PC-3 (cell line): ENCODE measurements at regions of chr13 and their contacts with region 1.

Region 1: DNA sequence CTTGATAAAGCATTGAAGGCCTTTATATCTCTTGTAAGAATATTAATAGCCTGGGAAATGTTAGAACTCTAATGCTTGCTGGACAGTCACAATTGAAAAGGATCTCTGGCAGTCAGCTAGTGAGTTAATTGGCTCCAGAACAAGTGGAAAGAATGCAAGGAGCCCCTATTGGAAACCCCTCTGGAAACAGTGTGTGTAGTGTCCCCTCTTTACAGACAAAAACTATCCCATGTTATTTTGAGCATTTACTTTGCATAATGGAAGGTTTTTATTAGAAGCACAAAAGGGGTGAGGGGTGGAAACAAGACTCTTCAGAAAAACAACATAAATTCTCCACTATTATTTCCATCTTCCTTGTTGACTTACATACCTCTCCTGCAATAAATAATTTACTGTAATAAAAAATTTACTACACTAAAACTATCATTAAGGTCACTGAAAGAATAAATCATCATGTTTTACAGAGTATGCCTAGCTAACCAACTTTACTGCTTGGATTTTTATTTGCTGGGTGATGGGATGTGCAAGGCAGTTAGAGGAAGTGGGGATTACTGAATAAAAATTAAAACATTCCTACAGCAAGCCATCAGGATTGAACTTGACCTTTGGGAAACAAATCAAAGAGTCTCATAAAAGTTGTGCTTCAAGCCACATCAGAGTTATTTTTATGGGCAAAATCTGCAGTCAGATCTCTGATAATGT is 610.4 kb downstream of the TBC1D4 start:
- DNase-seq: peak; percentile 91
- ATAC-seq: peak; percentile 71
- H3K4me3 ChIP-seq: peak overlapping the region; percentile 33; the same call in 1 of the 2 replicates
- H3K27ac ChIP-seq: peak overlapping the region; percentile 99
- H3K4me1 ChIP-seq: peaks cover 43% of the 10 kb centered on the region
- H3K27me3 ChIP-seq: no peaks in the 10 kb centered on the region
- CTCF ChIP-seq: no peak

Region 2: DNA sequence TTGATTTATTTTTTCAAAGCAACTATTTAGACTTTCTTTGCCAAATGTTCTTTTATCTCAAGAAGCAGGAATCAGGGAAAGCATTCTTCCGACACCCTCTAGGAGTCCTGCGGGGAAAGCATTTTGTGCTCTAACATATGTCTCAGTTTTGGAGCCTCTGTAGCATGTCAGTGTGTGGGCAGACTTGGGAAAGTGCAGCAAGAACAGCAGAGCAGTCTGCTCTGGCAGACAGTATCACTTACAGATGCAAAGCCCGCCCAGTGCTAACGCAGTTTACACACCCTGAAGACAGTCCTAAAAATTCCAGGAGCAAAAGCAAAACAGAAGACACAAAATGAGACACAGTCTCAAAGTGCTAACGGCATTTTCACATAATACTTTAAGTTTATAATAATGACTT is 1130.9 kb before region 1 on chr13:
- CTCF ChIA-PET with region 1: no interaction called
- POLR2A ChIA-PET with region 1: no interaction called
- intact Hi-C with region 1: no loop called
- DNase-seq: no peak
- ATAC-seq: no peak
- H3K4me3 ChIP-seq: no peak overlapping the region
- H3K27ac ChIP-seq: no peak overlapping the region
- H3K4me1 ChIP-seq: no peaks in the 10 kb centered on the region
- H3K27me3 ChIP-seq: no peaks in the 10 kb centered on the region
- CTCF ChIP-seq: no peak

Region 3: DNA sequence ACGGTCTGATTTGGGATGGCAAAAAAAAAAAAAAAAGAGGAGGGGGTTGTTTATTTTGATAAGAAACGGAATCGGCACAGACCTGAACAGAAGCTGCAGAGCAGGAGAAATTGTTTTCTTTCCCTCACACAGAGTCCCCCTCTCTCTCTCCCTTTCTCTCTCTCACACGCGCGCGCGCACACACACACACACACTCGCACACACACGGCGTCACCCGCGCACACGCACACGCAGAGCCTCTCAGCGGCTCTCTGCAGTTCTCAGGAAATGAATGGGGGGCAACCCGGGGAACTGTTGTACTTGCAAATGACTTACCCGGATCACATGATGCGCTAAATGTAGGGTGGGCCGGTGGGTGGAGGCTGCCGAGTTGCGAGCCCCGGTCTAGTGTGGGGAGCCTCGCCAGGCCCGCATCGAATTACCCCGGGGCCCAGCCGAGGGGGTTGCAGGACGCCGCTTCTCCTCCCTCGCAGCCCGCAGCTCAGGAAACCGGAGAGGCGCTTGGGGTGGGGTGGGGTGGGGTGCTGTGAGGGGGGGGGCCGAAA is 737.8 kb before region 1 on chr13:
- CTCF ChIA-PET with region 1: no interaction called
- POLR2A ChIA-PET with region 1: no interaction called
- intact Hi-C with region 1: loop called (anchors 1 kb)
- DNase-seq: peak; percentile 35
- ATAC-seq: peak; percentile 27
- H3K4me3 ChIP-seq: peak overlapping the region; percentile 96
- H3K27ac ChIP-seq: peak overlapping the region; percentile 34; the same call in 1 of the 2 replicates
- H3K4me1 ChIP-seq: peaks cover 39% of the 10 kb centered on the region
- H3K27me3 ChIP-seq: no peaks in the 10 kb centered on the region
- CTCF ChIP-seq: no peak

Region 4: DNA sequence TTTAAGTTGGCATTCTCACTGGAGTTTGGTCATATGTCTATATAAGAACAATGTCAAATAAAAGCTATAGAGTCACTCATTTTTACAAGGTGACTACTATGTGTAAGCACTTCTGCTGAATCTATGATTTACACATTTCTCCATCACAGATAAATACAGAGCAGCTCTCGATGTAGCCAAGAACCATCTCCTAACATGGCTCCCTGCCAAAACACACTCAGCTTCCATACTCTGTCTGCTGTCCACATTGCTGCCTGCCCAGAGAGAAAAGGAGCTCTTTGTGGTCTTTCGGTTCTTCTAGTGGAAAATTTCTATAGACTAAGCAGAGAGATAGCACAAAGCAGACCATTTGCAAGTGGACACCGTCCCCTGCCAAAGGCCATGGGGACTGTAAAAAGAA is 546.4 kb before region 1 on chr13:
- CTCF ChIA-PET with region 1: no interaction called
- POLR2A ChIA-PET with region 1: no interaction called
- intact Hi-C with region 1: loop called (anchors 2 kb)
- DNase-seq: peak; percentile 90
- ATAC-seq: peak; percentile 97
- H3K4me3 ChIP-seq: peak overlapping the region; percentile 22; the same call in 1 of the 2 replicates
- H3K27ac ChIP-seq: peak overlapping the region; percentile 89
- H3K4me1 ChIP-seq: peaks cover 25% of the 10 kb centered on the region
- H3K27me3 ChIP-seq: no peaks in the 10 kb centered on the region
- CTCF ChIP-seq: no peak

Region 5: GRCh38 chr13:74770361-74770760 is 101.2 kb before region 1 on chr13:
- CTCF ChIA-PET with region 1: no interaction called
- POLR2A ChIA-PET with region 1: no interaction called
- intact Hi-C with region 1: loop called (anchors 5 kb)
- DNase-seq: peak; percentile 78
- ATAC-seq: peak; percentile 55
- H3K4me3 ChIP-seq: no peak overlapping the region
- H3K27ac ChIP-seq: peak overlapping the region; percentile 66
- H3K4me1 ChIP-seq: peaks cover 34% of the 10 kb centered on the region
- H3K27me3 ChIP-seq: no peaks in the 10 kb centered on the region
- CTCF ChIP-seq: no peak

Region 6: GRCh38 chr13:74891610-74892009 is 20.1 kb after region 1 on chr13:
- CTCF ChIA-PET with region 1: no interaction called
- POLR2A ChIA-PET with region 1: no interaction called
- intact Hi-C with region 1: loop called (anchors 1 kb)
- DNase-seq: peak; percentile 84
- ATAC-seq: peak; percentile 91
- H3K4me3 ChIP-seq: no peak overlapping the region
- H3K27ac ChIP-seq: peak overlapping the region; percentile 76
- H3K4me1 ChIP-seq: peaks cover 32% of the 10 kb centered on the region
- H3K27me3 ChIP-seq: no peaks in the 10 kb centered on the region
- CTCF ChIP-seq: no peak

Region 7: DNA sequence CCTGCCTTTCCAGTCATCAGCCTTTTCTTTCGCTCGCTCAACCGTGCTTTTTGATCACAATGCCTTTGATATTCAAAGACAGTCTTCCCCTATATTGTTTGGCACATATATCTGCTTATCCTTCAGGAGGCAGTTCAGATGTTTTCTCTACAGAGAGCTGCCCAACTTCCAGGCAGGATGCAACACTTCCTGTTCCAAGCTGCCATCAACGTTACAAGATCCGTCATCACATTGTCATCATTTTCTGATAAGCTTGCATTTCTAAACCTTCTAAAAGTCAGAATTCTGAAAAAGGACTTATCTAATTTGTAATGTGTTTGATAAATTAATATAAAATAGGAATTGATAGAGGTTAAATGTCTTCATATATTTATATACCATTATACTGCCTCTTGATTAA is 36.3 kb after region 1 on chr13:
- CTCF ChIA-PET with region 1: no interaction called
- POLR2A ChIA-PET with region 1: no interaction called
- intact Hi-C with region 1: no loop called
- DNase-seq: no peak
- ATAC-seq: no peak
- H3K4me3 ChIP-seq: no peak overlapping the region
- H3K27ac ChIP-seq: no peak overlapping the region
- H3K4me1 ChIP-seq: no peaks in the 10 kb centered on the region
- H3K27me3 ChIP-seq: no peaks in the 10 kb centered on the region
- CTCF ChIP-seq: no peak

Region 8: DNA sequence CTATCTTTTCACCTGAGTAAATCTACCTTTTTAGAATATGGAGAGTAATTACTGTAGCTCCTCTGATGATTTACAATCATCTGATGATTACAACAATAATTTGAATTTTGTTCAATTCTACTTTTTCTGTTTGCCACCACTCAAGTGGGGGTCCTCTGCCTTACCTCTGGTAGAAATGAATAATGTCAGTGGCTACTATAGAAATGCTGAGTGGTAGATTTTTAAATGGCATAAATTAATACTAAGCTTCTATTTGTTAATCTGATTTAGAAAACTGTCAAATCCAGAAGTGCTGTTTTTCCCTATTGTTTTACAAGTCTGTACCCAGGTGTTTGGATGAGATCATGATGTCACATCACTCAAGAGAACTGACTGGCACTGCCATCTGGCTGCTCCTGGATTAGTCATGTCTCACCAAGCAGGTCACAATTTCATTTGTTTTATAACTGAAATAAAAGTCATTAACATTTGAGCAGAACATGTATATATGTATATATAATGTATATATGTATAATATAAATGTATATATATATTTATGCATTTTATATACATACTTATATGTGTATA is 115.7 kb after region 1 on chr13:
- CTCF ChIA-PET with region 1: no interaction called
- POLR2A ChIA-PET with region 1: no interaction called
- intact Hi-C with region 1: loop called (anchors 2 kb)
- DNase-seq: peak; percentile 21
- ATAC-seq: peak; percentile 49; the same call in 1 of the 2 replicates
- H3K4me3 ChIP-seq: no peak overlapping the region
- H3K27ac ChIP-seq: no peak overlapping the region
- H3K4me1 ChIP-seq: peaks cover 28% of the 10 kb centered on the region
- H3K27me3 ChIP-seq: no peaks in the 10 kb centered on the region
- CTCF ChIP-seq: no peak

Region 9: DNA sequence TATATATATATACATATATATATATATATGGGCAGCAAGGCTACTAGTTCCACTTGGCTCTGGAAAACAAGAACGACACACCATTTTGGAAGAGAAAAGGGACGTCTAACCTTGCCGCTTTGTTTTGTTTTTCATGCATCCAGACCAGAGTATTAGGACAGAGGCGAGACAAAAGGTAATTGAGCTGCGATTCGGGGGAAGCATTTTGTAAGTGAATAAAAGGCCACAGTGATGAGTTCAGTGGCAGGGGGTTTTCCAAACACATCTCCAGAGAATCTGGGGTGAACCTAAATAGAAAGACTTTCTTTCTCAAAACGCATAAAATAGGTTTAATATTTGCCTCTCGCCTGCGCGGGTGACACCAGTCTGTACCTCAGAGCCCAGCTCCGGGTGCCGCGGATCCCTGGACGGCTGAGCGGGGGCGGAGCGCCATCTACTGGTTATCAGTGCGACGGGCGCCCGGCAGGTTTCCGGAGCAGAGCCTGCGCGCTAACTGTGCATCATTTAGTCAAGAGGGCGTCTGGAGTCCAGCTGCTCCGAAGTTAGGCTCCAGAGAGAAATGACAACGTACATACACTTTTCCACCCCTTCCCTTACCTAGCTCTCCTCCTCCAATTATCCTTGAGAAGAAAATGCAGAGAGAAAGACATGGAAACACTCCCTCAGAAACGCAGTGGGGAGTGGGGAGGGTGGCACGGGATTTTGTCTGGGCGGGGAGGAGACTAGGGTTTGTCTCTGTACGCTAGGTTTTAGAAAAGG is 348.1 kb after region 1 on chr13:
- CTCF ChIA-PET with region 1: no interaction called
- POLR2A ChIA-PET with region 1: no interaction called
- intact Hi-C with region 1: loop called (anchors 1 kb)
- DNase-seq: peak; percentile 72
- ATAC-seq: peak; percentile 98
- H3K4me3 ChIP-seq: peak overlapping the region; percentile 64
- H3K27ac ChIP-seq: no peak overlapping the region
- H3K4me1 ChIP-seq: peaks cover 11% of the 10 kb centered on the region; the same call in 1 of the 2 replicates
- H3K27me3 ChIP-seq: no peaks in the 10 kb centered on the region
- CTCF ChIP-seq: peak; percentile 89